HEK293T (cell line): ENCODE measurements at regions of chr11 and their contacts with region 1.

Region 1: DNA sequence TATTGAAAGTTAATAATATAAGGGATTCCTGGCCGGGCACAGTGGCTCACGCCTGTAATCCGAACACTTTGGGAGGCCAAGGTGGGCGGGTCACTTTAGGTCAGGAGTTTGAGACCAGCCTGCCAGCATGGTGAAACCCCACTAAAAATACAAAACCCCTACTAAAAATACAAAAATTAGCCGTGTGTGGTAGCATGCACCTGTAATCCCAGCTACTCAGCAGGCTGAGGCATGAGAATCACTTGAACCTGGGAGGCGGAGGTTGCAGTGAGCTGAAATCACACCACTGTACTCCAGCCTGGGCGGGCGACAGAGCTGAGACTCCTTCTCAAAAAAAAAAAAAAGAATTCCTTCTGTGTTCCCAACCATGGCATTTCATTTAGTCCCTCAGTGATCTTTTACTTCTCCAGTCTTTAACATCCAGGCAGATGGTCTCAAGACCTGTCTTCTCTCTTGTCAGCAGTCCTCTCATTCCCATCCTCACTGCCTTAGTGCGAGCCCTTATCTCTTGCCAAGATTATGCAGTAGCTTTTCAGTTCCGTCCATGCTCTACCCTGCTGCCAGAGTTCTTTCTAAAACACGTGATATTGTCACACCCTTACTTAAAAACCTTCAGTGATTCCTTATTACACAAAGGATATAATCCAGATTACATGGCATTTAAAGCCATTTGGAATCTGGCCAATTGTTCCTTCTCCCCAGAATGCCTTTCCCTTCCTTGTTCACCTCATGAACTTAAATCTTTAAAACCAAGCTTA is 17.9 kb downstream of the RTN3 start:
- DNase-seq: no peak

Region 2: DNA sequence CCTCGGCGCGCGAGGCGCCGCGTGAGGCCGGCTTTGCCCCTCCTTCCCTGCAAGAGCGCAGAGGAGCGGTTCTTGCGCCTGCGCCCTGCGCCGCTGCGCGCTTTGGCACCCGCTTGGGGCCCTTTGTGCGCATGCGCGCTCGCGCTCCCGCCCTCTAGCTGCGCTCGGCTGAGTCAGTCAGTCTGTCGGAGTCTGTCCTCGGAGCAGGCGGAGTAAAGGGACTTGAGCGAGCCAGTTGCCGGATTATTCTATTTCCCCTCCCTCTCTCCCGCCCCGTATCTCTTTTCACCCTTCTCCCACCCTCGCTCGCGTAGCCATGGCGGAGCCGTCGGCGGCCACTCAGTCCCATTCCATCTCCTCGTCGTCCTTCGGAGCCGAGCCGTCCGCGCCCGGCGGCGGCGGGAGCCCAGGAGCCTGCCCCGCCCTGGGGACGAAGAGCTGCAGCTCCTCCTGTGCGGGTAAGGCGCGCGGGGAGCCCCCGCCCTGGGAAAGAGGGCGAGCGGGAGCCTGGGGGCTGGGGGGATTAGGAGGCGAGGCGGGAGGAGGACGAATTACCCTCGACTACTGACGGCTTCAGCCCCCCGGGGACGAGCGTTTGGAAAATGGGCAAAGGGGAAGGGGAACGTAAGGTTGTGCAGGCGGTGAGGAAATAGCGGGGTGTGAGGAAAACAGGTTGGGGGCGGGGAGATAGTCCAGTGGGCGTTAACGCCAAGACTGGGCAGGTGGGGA is 17.7 kb before region 1 on chr11 and contains the start of gene RTN3:
- CTCF ChIA-PET with region 1: no interaction called
- POLR2A ChIA-PET with region 1: interaction called, 18 read pairs
- DNase-seq: peak; percentile 98

Region 3: GRCh38 chr11:63719977-63720376 is 20.8 kb after region 1 on chr11:
- CTCF ChIA-PET with region 1: interaction called, 10 read pairs
- POLR2A ChIA-PET with region 1: no interaction called
- DNase-seq: no peak

Region 4: GRCh38 chr11:63813035-63813562 is 113.9 kb after region 1 on chr11 and contains the start of gene SPINDOC:
- CTCF ChIA-PET with region 1: no interaction called
- POLR2A ChIA-PET with region 1: no interaction called
- DNase-seq: peak; percentile 90